ENCODE measurements at regions of chr4 and their contacts with region 1.

Region 1: DNA sequence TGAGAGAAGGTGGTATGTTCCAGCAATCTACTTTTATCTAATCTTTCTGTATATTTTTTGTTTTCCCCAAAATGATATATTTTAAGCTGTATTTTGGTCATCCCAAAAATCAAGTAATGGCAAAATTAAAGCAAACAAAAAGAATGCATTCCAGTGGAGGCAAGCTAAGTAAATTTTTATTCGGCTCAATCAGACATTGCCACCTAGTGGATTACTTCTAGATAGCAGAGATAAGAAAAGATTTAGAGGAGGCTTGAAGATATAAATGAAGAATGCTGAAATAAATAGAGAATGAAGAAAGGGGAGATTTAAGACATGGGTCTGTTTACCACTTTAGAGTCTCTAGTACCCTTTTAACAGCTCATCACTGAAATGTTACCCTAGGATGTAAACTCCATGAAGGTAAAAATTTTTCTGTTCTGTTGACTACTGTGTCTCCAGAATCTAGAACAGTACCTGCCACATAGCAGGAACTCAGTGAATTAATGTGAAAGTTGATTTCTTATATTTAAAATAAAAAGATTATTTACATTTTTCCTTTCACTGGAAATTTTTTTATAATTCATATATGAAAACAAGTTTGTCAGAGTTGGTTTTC is 110.9 kb upstream of the ANK2 start:
- DNase-seq: no peak

Region 2: DNA sequence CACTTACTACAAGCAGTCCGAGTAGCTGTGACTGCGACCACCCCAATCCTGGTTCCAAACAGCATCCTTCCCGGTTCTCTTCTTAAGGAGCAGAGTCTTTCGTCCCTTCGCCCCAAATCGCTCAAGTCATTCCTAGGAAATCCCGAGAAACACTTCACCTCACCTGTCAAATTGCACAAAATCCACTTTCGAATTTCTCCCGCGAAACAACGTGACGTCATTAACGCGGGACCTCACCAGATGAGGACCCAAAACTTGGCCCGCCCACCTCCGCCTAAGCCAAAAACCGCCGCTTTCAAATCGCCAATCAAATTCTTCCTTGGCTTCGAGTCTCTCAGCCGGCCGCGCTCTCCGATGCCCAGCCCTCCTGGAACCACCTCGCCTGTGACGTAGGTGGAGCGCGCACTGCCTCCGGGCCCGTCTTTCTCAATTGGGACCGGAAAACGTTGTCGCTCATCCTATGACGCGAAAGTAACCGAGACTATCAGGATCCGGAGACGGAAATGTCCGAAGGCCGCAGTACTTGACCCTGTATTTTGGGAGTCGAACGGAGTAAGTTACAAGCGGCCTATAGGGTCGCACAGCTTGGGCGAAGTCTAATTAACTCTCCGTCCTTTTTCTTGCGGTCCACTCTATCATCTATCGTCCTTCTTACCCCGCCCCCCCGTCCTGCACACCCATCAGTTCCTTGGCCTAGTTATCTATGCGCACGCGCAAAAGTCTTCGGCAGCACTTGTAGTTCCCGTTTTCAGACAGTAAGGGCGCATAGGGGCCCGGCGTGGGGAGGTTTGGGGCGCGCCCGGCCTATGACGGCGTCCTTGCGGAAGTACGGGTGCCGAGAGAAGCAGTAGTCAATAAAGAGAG is 301.6 kb before region 1 on chr4 and contains the starts of genes LARP7 and ZGRF1:
- intact Hi-C with region 1: loop called (anchors 2 kb)
- DNase-seq: peak; percentile 95 to 100 (median 98)

Region 3: GRCh38 chr4:112693507-112693906 is 245.1 kb before region 1 on chr4:
- intact Hi-C with region 1: no loop called
- DNase-seq: no peak

Region 4: DNA sequence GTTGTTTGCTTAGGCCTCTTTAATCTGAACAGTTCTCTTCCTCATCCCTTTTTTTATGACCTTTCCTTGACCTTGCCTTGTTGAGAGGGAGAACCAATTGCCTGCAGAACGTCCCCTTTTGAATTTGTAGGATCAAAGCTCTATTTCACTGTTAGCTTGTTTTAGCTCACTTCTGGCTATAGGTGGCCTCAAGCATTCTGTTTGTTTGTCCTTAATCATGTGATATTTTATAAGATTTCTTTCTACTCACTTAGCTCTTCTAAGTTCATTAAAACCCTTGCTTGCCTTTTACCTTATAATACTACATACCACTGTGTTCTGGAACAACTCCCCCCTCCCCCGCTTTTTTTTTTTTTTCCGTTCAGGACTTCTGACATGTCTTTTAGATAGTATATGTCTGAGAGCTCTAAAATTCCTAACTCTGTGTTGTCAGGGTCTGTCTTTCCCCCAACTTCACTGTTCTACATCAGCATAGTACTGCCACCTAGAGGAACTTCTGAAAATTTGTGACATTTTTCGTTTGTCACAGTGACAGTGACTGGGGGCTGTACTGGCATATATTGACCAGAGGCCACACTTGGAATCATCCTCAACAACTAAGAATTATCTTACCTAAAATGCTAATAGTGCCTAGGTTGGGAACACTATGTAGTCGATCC is 173.1 kb before region 1 on chr4:
- intact Hi-C with region 1: loop called (anchors 5 kb)
- DNase-seq: no peak

Region 5: GRCh38 chr4:112853662-112854256 is 84.8 kb before region 1 on chr4:
- intact Hi-C with region 1: loop called (anchors 1 kb)
- DNase-seq: no peak

Measured in posterior cingulate gyrus (tissue), 11 donors.